ENCODE measurements at regions of chr17 and their contacts with region 1.

Region 1: DNA sequence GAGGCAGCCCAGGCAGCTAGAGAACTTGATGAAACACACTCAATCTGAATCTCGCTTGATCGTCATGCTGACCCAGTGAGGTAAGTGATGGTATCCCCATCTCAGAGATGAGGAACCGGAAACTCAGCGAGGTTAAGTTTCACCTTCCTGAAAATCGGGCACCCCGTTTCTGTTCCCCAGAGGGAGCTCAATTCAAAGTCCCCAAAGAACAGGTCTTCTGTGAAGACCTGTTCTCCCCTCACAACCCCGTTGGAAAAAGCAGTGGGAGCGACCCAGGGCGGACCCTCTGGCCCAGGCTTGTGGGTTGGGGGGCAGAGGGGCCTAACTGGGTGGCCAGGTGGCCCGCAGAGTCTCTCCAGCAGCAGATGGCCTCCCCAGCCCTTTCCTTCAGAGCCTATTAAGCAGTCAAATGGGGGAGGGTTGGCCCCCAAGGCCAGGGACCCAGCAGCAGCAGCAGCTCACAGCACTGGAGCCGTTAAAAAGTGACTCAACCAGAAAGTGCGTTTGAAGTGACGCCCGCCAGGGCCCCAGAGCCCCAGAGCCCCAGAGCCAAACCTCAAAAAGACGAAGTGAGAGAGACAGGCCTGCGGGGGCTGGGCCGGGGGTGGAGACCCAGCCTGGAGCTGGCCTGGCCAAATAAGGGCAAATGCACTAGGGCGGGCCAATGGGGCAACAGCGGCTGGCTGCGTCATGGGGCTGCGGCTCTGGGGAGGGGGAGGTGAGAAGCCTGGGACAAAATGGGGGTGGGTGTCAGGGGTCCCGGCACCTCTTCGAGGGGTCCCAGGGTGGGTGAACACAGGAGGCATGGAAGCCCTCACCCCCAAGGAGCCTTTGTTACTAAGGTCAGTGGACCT is 9.2 kb upstream of the TSPOAP1 start:
- DNase-seq: peak; percentile 81 to 96 (median 92)
- ATAC-seq: peak; percentile 72
- H3K4me3 ChIP-seq: peak overlapping the region; percentile 90 to 99
- H3K4me3 Mint-ChIP-seq: peak overlapping the region; percentile 92
- H3K27ac ChIP-seq: peak overlapping the region; percentile 92 to 99
- H3K27ac Mint-ChIP-seq: peak overlapping the region; percentile 97
- H3K4me1 ChIP-seq: peaks cover 72% of the 10 kb centered on the region
- H3K4me1 Mint-ChIP-seq: peaks cover 83% of the 10 kb centered on the region
- H3K27me3 ChIP-seq: no peaks in the 10 kb centered on the region
- H3K27me3 Mint-ChIP-seq: no peaks in the 10 kb centered on the region
- CTCF ChIP-seq: no peak

Region 2: DNA sequence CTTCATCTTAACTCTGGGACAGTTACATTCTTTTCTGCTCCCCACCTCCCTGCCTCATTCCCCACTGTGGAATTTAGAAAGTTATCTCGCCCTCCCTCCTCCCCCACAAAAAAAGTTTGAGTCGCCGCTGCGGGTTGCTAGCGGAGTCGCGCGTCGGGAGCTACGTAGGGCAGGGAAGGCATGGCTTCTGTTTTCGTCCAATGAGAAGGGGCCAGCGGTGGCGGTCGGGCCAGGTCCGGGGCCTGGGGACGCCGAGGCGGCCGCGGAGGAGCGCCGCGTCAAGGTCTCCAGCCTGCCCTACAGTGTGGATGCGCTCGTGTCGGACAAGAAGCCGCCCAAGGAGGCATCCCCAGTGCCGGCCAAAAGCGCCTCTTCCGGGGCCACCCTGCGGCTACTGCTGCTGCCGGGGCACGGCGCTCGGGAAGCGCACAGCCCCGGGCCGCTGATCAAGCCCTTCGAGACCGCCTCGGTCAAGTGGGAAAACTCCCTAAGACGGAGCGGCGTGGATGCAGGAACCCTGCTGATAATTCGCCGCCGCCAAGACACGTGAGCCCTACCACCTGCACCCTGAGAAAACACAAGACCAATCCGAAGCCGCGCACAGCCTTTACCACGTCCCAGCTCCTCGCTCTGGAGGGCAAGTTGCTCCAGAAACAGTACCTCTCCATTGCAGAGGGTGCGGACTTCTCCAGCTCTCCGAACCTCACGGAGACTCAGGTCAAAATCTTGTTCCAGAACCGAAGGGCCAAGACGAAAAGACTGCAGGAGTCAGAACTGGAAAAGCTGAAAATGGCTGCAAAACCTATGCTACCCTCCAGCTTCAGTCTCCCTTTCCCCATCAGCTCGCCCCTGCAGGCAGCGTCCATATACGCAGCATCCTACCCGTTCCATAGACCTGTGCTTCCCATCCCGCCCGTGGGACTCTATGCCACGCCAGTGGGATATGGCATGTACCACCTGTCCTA is 180.7 kb before region 1 on chr17:
- CTCF ChIA-PET with region 1: no interaction called
- POLR2A ChIA-PET with region 1: no interaction called
- intact Hi-C with region 1: loop called in 1 of 2 experiments (anchors 10 kb)
- DNase-seq: peak; percentile 19 to 81 (median 56)
- ATAC-seq: peak; percentile 54
- H3K4me3 ChIP-seq: peak overlapping the region; percentile 73 to 79
- H3K4me3 Mint-ChIP-seq: peak overlapping the region; percentile 85
- H3K27ac ChIP-seq: peak overlapping the region; percentile 84 to 92
- H3K27ac Mint-ChIP-seq: peak overlapping the region; percentile 87
- H3K4me1 ChIP-seq: peaks cover 60% of the 10 kb centered on the region
- H3K4me1 Mint-ChIP-seq: peaks cover 69% of the 10 kb centered on the region
- H3K27me3 ChIP-seq: no peaks in the 10 kb centered on the region
- H3K27me3 Mint-ChIP-seq: no peaks in the 10 kb centered on the region
- CTCF ChIP-seq: no peak

Region 3: GRCh38 chr17:58352014-58352842 is 14.4 kb after region 1 on chr17 and contains the start of gene SUPT4H1:
- CTCF ChIA-PET with region 1: interaction called, 91 read pairs
- POLR2A ChIA-PET with region 1: interaction called, 773 read pairs
- intact Hi-C with region 1: loop called in 1 of 2 experiments (anchors 1 kb)
- DNase-seq: peak; percentile 81 to 97 (median 91)
- ATAC-seq: peak; percentile 88
- H3K4me3 ChIP-seq: peak within 1 kb of the TSS; percentile 69 to 70
- H3K4me3 Mint-ChIP-seq: peak within 1 kb of the TSS; percentile 100
- H3K27ac ChIP-seq: peak within 1 kb of the TSS; percentile 75 to 81
- H3K27ac Mint-ChIP-seq: peak within 1 kb of the TSS; percentile 100
- H3K4me1 ChIP-seq: peaks cover 46% of the 10 kb centered on the region
- H3K4me1 Mint-ChIP-seq: peaks cover 60% of the 10 kb centered on the region
- H3K27me3 ChIP-seq: no peaks in the 10 kb centered on the region
- H3K27me3 Mint-ChIP-seq: no peaks in the 10 kb centered on the region
- CTCF ChIP-seq: no peak
- total RNA-seq, gene SUPT4H1: 45.2 to 59.7 TPM

Region 4: GRCh38 chr17:58587702-58588254 is 250.0 kb after region 1 on chr17:
- CTCF ChIA-PET with region 1: no interaction called
- POLR2A ChIA-PET with region 1: no interaction called
- intact Hi-C with region 1: no loop called
- DNase-seq: peak; percentile 30 to 78 (median 58)
- ATAC-seq: peak; percentile 92
- H3K4me3 ChIP-seq: no peak overlapping the region
- H3K4me3 Mint-ChIP-seq: no peak overlapping the region
- H3K27ac ChIP-seq: no peak overlapping the region
- H3K27ac Mint-ChIP-seq: no peak overlapping the region
- H3K4me1 ChIP-seq: no peaks in the 10 kb centered on the region
- H3K4me1 Mint-ChIP-seq: no peaks in the 10 kb centered on the region
- H3K27me3 ChIP-seq: no peaks in the 10 kb centered on the region
- H3K27me3 Mint-ChIP-seq: no peaks in the 10 kb centered on the region
- CTCF ChIP-seq: peak; percentile 96

Region 5: GRCh38 chr17:58615768-58616659 is 278.2 kb after region 1 on chr17:
- CTCF ChIA-PET with region 1: no interaction called
- POLR2A ChIA-PET with region 1: no interaction called
- intact Hi-C with region 1: no loop called
- DNase-seq: no peak
- ATAC-seq: no peak
- H3K4me3 ChIP-seq: no peak overlapping the region
- H3K4me3 Mint-ChIP-seq: no peak overlapping the region
- H3K27ac ChIP-seq: no peak overlapping the region
- H3K27ac Mint-ChIP-seq: no peak overlapping the region
- H3K4me1 ChIP-seq: no peaks in the 10 kb centered on the region
- H3K4me1 Mint-ChIP-seq: no peaks in the 10 kb centered on the region
- H3K27me3 ChIP-seq: no peaks in the 10 kb centered on the region
- H3K27me3 Mint-ChIP-seq: no peaks in the 10 kb centered on the region
- CTCF ChIP-seq: no peak

Region 6: GRCh38 chr17:58658804-58659713 is 321.2 kb after region 1 on chr17:
- CTCF ChIA-PET with region 1: no interaction called
- POLR2A ChIA-PET with region 1: no interaction called
- intact Hi-C with region 1: loop called in 1 of 2 experiments (anchors 10 kb)
- DNase-seq: peak; percentile 56 to 95 (median 80)
- ATAC-seq: peak; percentile 83
- H3K4me3 ChIP-seq: peak overlapping the region; percentile 40 to 41
- H3K4me3 Mint-ChIP-seq: peak overlapping the region; percentile 77
- H3K27ac ChIP-seq: peak overlapping the region; percentile 91 to 96
- H3K27ac Mint-ChIP-seq: peak overlapping the region; percentile 100
- H3K4me1 ChIP-seq: no peaks in the 10 kb centered on the region
- H3K4me1 Mint-ChIP-seq: peaks cover 17% of the 10 kb centered on the region
- H3K27me3 ChIP-seq: no peaks in the 10 kb centered on the region
- H3K27me3 Mint-ChIP-seq: no peaks in the 10 kb centered on the region
- CTCF ChIP-seq: no peak

Region 7: GRCh38 chr17:59220376-59221158 is 882.7 kb after region 1 on chr17 and contains the start of gene GDPD1:
- CTCF ChIA-PET with region 1: no interaction called
- POLR2A ChIA-PET with region 1: no interaction called
- intact Hi-C with region 1: no loop called
- DNase-seq: peak; percentile 94 to 99 (median 97)
- ATAC-seq: peak; percentile 96
- H3K4me3 ChIP-seq: peak within 1 kb of the TSS; percentile 97 to 100
- H3K4me3 Mint-ChIP-seq: peak within 1 kb of the TSS; percentile 98
- H3K27ac ChIP-seq: peak within 1 kb of the TSS; percentile 91 to 92
- H3K27ac Mint-ChIP-seq: peak within 1 kb of the TSS; percentile 99
- H3K4me1 ChIP-seq: peaks cover 4% of the 10 kb centered on the region
- H3K4me1 Mint-ChIP-seq: peaks cover 13% of the 10 kb centered on the region
- H3K27me3 ChIP-seq: no peaks in the 10 kb centered on the region
- H3K27me3 Mint-ChIP-seq: no peaks in the 10 kb centered on the region
- CTCF ChIP-seq: peak; percentile 71
- total RNA-seq, gene GDPD1: 1.1 to 1.8 TPM

Region 8: GRCh38 chr17:59619293-59620063 is 1281.7 kb after region 1 on chr17 and contains the start of gene CLTC:
- CTCF ChIA-PET with region 1: no interaction called
- POLR2A ChIA-PET with region 1: no interaction called
- intact Hi-C with region 1: loop called in 1 of 2 experiments (anchors 10 kb)
- DNase-seq: peak; percentile 83 to 98 (median 90)
- ATAC-seq: peak; percentile 82
- H3K4me3 ChIP-seq: peak within 1 kb of the TSS; percentile 98 to 99
- H3K4me3 Mint-ChIP-seq: peak within 1 kb of the TSS; percentile 96
- H3K27ac ChIP-seq: peak within 1 kb of the TSS; percentile 91 to 99
- H3K27ac Mint-ChIP-seq: peak within 1 kb of the TSS; percentile 98
- H3K4me1 ChIP-seq: peaks cover 37% of the 10 kb centered on the region
- H3K4me1 Mint-ChIP-seq: peaks cover 48% of the 10 kb centered on the region
- H3K27me3 ChIP-seq: no peaks in the 10 kb centered on the region
- H3K27me3 Mint-ChIP-seq: no peaks in the 10 kb centered on the region
- CTCF ChIP-seq: no peak
- total RNA-seq, gene CLTC: 73.4 to 86.0 TPM

Region 9: GRCh38 chr17:59707971-59708509 is 1370.2 kb after region 1 on chr17:
- CTCF ChIA-PET with region 1: no interaction called
- POLR2A ChIA-PET with region 1: no interaction called
- intact Hi-C with region 1: no loop called
- DNase-seq: no peak
- ATAC-seq: no peak
- H3K4me3 ChIP-seq: peak overlapping the region; percentile 72 to 80
- H3K4me3 Mint-ChIP-seq: peak overlapping the region; percentile 95
- H3K27ac ChIP-seq: peak overlapping the region; percentile 80 to 94
- H3K27ac Mint-ChIP-seq: peak overlapping the region; percentile 97
- H3K4me1 ChIP-seq: peaks cover 34% of the 10 kb centered on the region
- H3K4me1 Mint-ChIP-seq: peaks cover 63% of the 10 kb centered on the region
- H3K27me3 ChIP-seq: no peaks in the 10 kb centered on the region
- H3K27me3 Mint-ChIP-seq: no peaks in the 10 kb centered on the region
- CTCF ChIP-seq: no peak